Calu3 (cell line): ENCODE measurements at regions of chr2 and their contacts with region 1.

Region 1: GRCh38 chr2:110869472-110870077 is 137.2 kb downstream of the ACOXL start:
- DNase-seq: peak; percentile 68
- H3K4me3 Mint-ChIP-seq: no peak overlapping the region
- H3K27ac Mint-ChIP-seq: no peak overlapping the region
- H3K4me1 Mint-ChIP-seq: peaks cover 10% of the 10 kb centered on the region
- H3K27me3 Mint-ChIP-seq: peaks cover 38% of the 10 kb centered on the region
- CTCF ChIP-seq: no peak

Region 2: DNA sequence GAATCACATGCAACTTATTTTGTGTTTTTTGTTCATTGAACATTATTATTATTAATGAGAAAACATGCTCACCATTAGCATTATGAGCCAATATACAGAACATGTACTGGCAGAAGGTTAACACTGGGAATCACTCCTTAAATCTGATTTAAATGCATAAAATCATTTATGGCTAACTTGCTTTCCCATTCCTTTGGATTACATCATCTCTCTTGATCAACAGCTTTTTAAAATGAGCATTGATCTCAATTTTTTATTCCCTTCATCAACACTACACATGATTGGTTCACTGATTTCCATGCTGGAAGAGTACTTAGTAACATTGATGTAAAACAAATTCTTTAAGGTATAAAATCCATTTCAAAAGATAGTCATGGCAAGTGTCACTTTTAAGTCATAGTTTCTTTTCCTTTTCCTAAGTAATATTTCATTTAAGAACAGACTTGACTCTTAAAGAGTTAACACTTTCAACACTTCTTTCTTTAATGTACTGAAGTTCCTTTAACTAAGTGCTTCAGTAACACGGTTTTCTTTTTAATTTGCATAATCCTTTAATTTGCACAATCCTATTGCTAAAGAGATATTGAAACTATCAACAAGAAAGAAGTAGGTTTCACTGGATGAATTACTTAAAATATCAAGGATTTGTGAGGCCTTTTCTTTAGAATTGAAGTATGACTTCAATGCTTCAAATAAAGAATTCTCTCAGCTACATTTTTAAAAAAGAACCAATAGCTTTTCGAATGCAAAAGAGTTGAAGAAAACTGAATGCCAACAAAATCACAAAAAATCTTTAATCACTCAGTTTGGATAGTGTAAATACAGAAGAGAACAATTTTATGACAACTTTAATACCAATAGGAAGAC is 166.8 kb before region 1 on chr2:
- CTCF ChIA-PET with region 1: no interaction called
- intact Hi-C with region 1: no loop called
- DNase-seq: no peak
- H3K4me3 Mint-ChIP-seq: no peak overlapping the region
- H3K27ac Mint-ChIP-seq: no peak overlapping the region
- H3K4me1 Mint-ChIP-seq: no peaks in the 10 kb centered on the region
- H3K27me3 Mint-ChIP-seq: peaks cover 72% of the 10 kb centered on the region
- CTCF ChIP-seq: no peak

Region 3: DNA sequence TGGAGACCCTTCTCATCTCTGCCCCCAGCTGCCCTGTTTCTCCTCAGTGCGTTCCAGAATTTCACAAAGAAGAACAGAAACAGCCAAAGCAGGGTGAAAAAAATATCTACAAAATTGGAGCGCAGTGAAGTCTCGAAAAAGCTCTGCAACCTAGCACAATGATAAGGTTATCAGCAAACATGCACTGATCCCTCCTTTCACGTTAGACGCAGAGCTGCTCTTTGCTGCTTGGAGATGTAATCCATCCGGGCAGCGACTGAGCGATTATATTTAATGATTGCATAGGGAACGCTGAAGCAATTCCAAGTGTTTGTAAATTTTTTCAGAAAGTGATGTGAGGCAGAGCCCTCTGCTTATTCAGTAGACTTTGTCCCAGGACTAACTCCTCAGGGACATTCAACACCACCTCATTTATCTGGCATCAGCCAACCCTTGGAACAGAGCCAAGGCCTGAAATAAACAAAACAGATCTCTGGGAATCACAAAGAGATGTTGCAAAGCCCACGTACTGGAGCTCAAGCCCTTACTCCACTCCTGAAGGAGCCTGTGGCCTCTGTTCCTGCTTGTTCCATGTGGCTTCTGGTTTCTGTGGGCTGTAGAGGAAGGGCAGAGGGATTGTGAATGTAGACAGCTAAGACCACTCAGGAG is 78.6 kb after region 1 on chr2:
- CTCF ChIA-PET with region 1: no interaction called
- intact Hi-C with region 1: loop called (anchors 2 kb)
- DNase-seq: no peak
- H3K4me3 Mint-ChIP-seq: no peak overlapping the region
- H3K27ac Mint-ChIP-seq: no peak overlapping the region
- H3K4me1 Mint-ChIP-seq: no peaks in the 10 kb centered on the region
- H3K27me3 Mint-ChIP-seq: peaks cover 31% of the 10 kb centered on the region
- CTCF ChIP-seq: no peak

Region 4: GRCh38 chr2:111042772-111043771 is 173.5 kb after region 1 on chr2:
- CTCF ChIA-PET with region 1: no interaction called
- intact Hi-C with region 1: no loop called
- DNase-seq: no peak
- H3K4me3 Mint-ChIP-seq: no peak overlapping the region
- H3K27ac Mint-ChIP-seq: no peak overlapping the region
- H3K4me1 Mint-ChIP-seq: no peaks in the 10 kb centered on the region
- H3K27me3 Mint-ChIP-seq: peaks cover 16% of the 10 kb centered on the region
- CTCF ChIP-seq: no peak